Activated T-helper 2 cell treated with anti-CD3 and anti-CD28 coated beads, Interferon-gamma antibody, Interleukin-2, Interleukin-4, amounts not matched to agents 10 μg/mL and 5 μg/mL and 100 μg/mL, durations not matched to agents 14 hours and 24 hours and 36 hours (primary cell): ENCODE measurements at regions of chr3 and their contacts with region 1.

Region 1: GRCh38 chr3:192816351-192816750 is 89.0 kb upstream of the FGF12 start:
- DNase-seq: no peak
- H3K4me3 Mint-ChIP-seq: no peak overlapping the region
- H3K27ac Mint-ChIP-seq: no peak overlapping the region
- H3K4me1 Mint-ChIP-seq: peaks cover 45% of the 10 kb centered on the region
- H3K27me3 Mint-ChIP-seq: peaks cover 3% of the 10 kb centered on the region

Region 2: GRCh38 chr3:191641789-191642188 is 1174.6 kb before region 1 on chr3:
- intact Hi-C with region 1: no loop called
- DNase-seq: no peak
- H3K4me3 Mint-ChIP-seq: no peak overlapping the region
- H3K27ac Mint-ChIP-seq: no peak overlapping the region
- H3K4me1 Mint-ChIP-seq: no peaks in the 10 kb centered on the region
- H3K27me3 Mint-ChIP-seq: no peaks in the 10 kb centered on the region

Region 3: GRCh38 chr3:192444096-192444790 is 372.1 kb before region 1 on chr3:
- intact Hi-C with region 1: no loop called
- DNase-seq: peak; percentile 28
- H3K4me3 Mint-ChIP-seq: no peak overlapping the region
- H3K27ac Mint-ChIP-seq: no peak overlapping the region
- H3K4me1 Mint-ChIP-seq: peaks cover 2% of the 10 kb centered on the region
- H3K27me3 Mint-ChIP-seq: peaks cover 20% of the 10 kb centered on the region

Region 4: DNA sequence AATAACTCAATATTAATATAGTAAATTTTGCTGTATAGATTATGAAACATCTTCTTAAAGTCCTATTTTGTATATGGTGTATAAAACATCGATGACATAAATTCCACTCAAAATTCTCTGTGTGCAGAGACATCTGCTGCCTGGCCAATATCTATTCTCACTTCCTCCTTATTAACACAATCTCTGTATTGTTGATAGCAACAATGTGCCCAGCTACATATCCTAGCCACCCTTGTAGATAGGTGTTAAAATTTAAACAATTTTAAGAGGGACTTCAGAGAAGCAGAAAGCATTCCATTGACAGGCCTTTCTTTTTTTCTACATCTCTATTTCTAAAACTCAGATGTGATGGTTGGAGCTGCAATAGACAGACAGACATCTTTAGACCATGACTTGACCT is 161.3 kb before region 1 on chr3:
- intact Hi-C with region 1: no loop called
- DNase-seq: no peak
- H3K4me3 Mint-ChIP-seq: no peak overlapping the region
- H3K27ac Mint-ChIP-seq: no peak overlapping the region
- H3K4me1 Mint-ChIP-seq: no peaks in the 10 kb centered on the region
- H3K27me3 Mint-ChIP-seq: peaks cover 3% of the 10 kb centered on the region

Region 5: DNA sequence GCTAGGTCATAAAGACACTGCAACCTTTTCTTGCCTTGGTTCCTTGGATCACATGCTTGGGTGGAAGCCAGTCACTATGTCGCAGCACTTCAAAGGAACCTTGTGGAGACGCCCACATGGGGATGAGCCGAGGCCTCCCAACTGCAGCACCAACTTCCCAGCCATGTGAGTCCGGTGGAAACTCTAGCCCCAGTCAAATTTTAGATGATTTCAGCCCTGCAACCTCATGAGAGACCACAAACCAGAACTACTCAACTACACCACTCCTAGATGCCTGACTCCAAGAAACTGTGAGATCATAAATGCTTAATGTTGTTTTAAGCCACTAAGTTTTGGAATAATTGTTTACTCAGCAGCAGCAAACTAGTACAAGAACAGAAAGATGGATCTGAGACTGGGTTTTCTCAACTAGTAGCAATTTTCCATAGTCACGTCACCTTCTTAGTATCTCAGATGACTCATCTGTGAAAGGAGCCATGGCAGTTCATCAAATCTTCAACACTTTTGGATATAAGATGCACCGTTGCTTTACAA is 14.8 kb after region 1 on chr3:
- intact Hi-C with region 1: loop called (anchors 1 kb)
- DNase-seq: no peak
- H3K4me3 Mint-ChIP-seq: no peak overlapping the region
- H3K27ac Mint-ChIP-seq: peak overlapping the region; percentile 77
- H3K4me1 Mint-ChIP-seq: peaks cover 38% of the 10 kb centered on the region
- H3K27me3 Mint-ChIP-seq: no peaks in the 10 kb centered on the region

Region 6: GRCh38 chr3:192887047-192887446 is 70.7 kb after region 1 on chr3:
- intact Hi-C with region 1: loop called (anchors 1 kb)
- DNase-seq: no peak
- H3K4me3 Mint-ChIP-seq: peak overlapping the region; percentile 17
- H3K27ac Mint-ChIP-seq: peak overlapping the region; percentile 75
- H3K4me1 Mint-ChIP-seq: peaks cover 55% of the 10 kb centered on the region
- H3K27me3 Mint-ChIP-seq: peaks cover 2% of the 10 kb centered on the region

Region 7: DNA sequence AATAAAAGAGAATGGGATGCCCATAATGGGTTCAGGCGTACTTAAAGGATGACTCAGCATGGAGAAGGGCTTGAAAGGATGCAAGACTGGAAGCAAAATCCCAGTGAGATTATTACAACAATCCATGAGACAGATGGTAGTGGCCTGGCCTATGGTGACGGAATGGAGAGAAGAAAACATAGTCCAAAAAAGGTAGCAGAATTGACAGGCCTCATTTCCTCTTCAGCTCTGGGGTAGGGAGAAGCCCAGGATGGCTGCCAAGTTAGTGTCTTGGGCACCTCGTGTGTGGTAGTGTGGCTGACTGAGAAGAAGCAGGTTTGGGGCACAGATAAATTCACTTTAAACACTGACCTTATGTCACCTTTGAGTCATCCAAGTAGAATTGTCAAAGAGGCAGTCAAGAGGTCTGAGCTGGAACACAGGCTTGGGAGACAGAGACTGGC is 83.2 kb after region 1 on chr3:
- intact Hi-C with region 1: loop called (anchors 1 kb)
- DNase-seq: no peak
- H3K4me3 Mint-ChIP-seq: no peak overlapping the region
- H3K27ac Mint-ChIP-seq: peak overlapping the region; percentile 79
- H3K4me1 Mint-ChIP-seq: peaks cover 55% of the 10 kb centered on the region
- H3K27me3 Mint-ChIP-seq: peaks cover 12% of the 10 kb centered on the region

Region 8: GRCh38 chr3:192906949-192907348 is 90.6 kb after region 1 on chr3:
- intact Hi-C with region 1: loop called (anchors 1 kb)
- DNase-seq: no peak
- H3K4me3 Mint-ChIP-seq: no peak overlapping the region
- H3K27ac Mint-ChIP-seq: peak overlapping the region; percentile 72
- H3K4me1 Mint-ChIP-seq: peaks cover 35% of the 10 kb centered on the region
- H3K27me3 Mint-ChIP-seq: peaks cover 2% of the 10 kb centered on the region

Region 9: GRCh38 chr3:193040836-193041672 is 224.7 kb after region 1 on chr3:
- intact Hi-C with region 1: loop called (anchors 1 kb)
- DNase-seq: no peak
- H3K4me3 Mint-ChIP-seq: no peak overlapping the region
- H3K27ac Mint-ChIP-seq: no peak overlapping the region
- H3K4me1 Mint-ChIP-seq: peaks cover 3% of the 10 kb centered on the region
- H3K27me3 Mint-ChIP-seq: peaks cover 10% of the 10 kb centered on the region

Region 10: GRCh38 chr3:193572426-193572908 is 756.1 kb after region 1 on chr3:
- intact Hi-C with region 1: loop called (anchors 5 kb)
- DNase-seq: peak; percentile 25
- H3K4me3 Mint-ChIP-seq: no peak overlapping the region
- H3K27ac Mint-ChIP-seq: no peak overlapping the region
- H3K4me1 Mint-ChIP-seq: peaks cover 2% of the 10 kb centered on the region
- H3K27me3 Mint-ChIP-seq: peaks cover 2% of the 10 kb centered on the region